Left ventricle myocardium superior (tissue), 1 donor: ENCODE measurements at regions of chr6 and their contacts with region 1.

Region 1: DNA sequence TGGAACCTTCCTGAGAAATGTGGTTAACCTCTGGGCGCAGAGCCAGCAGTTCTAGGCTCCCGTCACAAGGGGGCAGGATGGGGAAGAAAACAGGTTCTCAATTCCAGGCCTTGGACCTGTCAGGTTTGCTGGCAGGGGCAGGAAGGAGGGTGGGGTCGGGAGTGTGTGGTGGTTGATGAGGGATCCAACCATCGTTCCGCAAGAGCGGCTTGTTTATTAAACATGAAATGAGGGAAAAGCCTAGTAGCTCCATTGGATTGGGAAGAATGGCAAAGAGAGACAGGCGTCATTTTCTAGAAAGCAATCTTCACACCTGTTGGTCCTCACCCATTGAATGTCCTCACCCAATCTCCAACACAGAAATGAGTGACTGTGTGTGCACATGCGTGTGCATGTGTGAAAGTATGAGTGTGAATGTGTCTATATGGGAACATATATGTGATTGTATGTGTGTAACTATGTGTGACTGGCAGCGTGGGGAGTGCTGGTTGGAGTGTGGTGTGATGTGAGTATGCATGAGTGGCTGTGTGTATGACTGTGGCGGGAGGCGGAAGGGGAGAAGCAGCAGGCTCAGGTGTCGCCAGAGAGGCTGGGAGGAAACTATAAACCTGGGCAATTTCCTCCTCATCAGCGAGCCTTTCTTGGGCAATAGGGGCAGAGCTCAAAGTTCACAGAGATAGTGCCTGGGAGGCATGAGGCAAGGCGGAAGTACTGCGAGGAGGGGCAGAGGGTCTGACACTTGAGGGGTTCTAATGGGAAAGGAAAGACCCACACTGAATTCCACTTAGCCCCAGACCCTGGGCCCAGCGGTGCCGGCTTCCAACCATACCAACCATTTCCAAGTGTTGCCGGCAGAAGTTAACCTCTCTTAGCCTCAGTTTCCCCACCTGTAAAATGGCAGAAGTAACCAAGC is 29.6 kb downstream of the SRSF3 start:
- DNase-seq: peak; percentile 88
- ATAC-seq: peak; percentile 66

Region 2: GRCh38 chr6:36526066-36526465 is 97.7 kb before region 1 on chr6:
- intact Hi-C with region 1: no loop called
- DNase-seq: no peak
- ATAC-seq: no peak

Region 3: GRCh38 chr6:36681863-36682262 is 58.1 kb after region 1 on chr6:
- intact Hi-C with region 1: loop called (anchors 2 kb)
- DNase-seq: no peak
- ATAC-seq: no peak

Region 4: GRCh38 chr6:36759148-36759759 is 135.5 kb after region 1 on chr6:
- intact Hi-C with region 1: loop called (anchors 2 kb)
- DNase-seq: peak; percentile 88
- ATAC-seq: peak; percentile 89